T-cell (primary cell): ENCODE measurements at regions of chr1 and their contacts with region 1.

Region 1: DNA sequence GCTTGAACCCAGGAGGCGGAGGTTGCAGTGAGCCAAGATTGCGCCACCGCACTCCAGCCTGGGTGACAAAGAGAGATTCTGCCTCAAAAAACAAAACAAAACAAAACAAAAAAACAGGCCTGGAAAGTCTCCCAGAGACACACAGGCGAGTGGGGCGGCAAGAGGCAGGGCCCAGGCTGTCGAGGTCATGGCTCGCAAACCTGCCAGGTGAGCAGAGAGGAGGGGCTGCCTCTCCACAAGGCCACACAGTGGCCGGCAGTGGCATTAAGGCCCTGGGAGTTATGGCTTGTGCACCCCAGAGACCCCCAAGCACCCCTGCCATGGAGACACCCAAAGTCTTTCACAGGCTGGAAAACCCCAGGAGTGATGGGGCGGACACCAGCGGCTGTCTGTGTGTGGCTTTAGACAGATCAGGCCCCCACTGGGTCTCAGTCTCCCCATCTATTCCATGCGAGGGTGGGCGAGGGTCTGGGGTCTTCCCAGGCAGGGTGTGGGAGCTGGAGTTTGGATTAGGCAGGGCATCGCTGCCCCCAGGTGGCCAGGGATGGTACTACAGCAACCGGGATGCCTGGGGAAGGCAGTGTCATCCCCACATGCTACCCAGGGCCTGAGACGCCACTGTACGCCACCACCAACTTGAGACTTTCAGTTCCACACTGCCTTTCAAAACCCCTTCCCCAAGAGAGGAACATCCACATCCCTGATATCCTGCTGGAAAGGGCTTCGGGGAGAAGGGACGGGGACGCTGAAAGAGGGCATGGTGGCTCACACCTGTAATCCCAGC is 7.3 kb upstream of the CTRC start:
- DNase-seq: peak; percentile 35 to 83 (median 66)
- ATAC-seq: peak; percentile 53 to 75 (median 67)
- H3K4me3 ChIP-seq: no peak overlapping the region
- H3K4me3 Mint-ChIP-seq: no peak overlapping the region
- H3K27ac ChIP-seq: no peak overlapping the region
- H3K27ac Mint-ChIP-seq: no peak overlapping the region
- H3K4me1 ChIP-seq: peaks cover 0 to 2% of the 10 kb centered on the region in 2 experiments
- H3K4me1 Mint-ChIP-seq: peaks cover 0 to 8% (median 5%) of the 10 kb centered on the region in 3 donors
- H3K27me3 ChIP-seq: no peaks in the 10 kb centered on the region
- H3K27me3 Mint-ChIP-seq: no peaks in the 10 kb centered on the region

Region 2: DNA sequence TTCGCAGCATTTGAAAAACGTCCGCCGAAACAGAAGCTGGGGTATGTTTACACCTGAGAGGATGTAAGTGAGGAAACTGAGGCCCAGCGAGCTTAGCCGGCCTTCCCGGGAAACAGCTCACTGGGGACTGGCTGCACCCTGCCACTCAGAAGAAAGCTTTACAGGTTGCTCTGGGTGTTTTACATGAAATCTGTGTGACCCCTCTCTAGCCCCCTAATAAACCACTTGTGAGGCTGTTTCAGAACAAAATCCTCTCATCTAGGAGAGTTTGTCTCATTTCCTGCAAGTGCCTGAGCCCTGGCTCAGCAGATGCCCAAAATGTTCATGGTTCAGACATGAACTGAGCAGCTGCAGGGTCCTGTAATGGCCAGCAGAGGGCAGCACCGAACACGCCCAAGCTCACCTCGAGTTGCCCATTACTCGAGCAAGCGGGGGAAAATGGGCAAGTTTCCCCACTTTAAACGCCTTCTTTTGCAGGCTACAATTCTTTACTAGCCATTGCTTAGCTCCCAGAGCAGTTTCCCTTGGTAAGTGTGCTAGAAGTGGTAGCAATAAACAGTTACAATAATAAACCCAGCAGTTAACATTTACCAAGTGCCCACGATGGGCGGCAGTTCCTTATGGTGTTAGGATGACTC is 107.5 kb before region 1 on chr1:
- CTCF ChIA-PET with region 1: interaction called, 23 to 68 read pairs
- POLR2A ChIA-PET with region 1: interaction called in 1 of 2 experiments, 3 read pairs
- DNase-seq: peak; percentile 34 to 89 (median 67)
- ATAC-seq: peak; percentile 70 to 87 (median 83)
- H3K4me3 ChIP-seq: no peak overlapping the region
- H3K4me3 Mint-ChIP-seq: no peak overlapping the region
- H3K27ac ChIP-seq: no peak overlapping the region
- H3K27ac Mint-ChIP-seq: no peak overlapping the region
- H3K4me1 ChIP-seq: peaks cover 0 to 8% of the 10 kb centered on the region in 2 experiments
- H3K4me1 Mint-ChIP-seq: peaks cover 0 to 5% (median 0%) of the 10 kb centered on the region in 3 donors
- H3K27me3 ChIP-seq: peaks cover 0 to 16% of the 10 kb centered on the region in 2 experiments
- H3K27me3 Mint-ChIP-seq: peaks cover 5 to 6% of the 10 kb centered on the region in 2 donors

Region 3: DNA sequence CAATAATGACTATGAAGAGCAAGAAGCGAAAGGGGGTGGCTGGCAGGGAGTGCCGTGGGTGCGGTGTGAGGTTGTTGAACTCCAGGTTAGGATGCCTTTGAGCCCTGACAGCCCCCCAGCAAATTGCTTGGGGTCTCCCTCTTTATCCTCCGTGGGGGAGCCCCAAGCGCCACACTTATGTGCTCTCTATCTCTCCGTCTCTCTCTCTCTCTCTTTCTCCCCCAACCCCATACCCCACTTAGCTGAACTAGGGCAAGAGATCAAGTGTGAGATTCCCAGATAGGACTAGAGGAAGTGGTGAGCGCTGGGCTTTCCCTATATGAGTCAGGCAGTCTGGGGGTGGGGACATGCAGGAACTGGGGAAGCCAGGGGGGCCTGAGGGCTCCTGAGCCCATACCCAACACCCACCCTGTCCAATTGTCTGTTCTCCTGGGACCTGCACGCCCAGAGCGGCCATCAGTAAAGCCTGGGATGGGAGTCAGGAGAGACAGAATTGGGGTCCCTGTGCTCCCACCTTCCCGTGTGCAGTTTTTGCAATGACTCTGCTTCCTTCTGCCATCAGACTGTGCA is 13.5 kb before region 1 on chr1:
- CTCF ChIA-PET with region 1: no interaction called
- POLR2A ChIA-PET with region 1: interaction called in 1 of 2 experiments, 10 read pairs
- DNase-seq: peak in 33 of 35 experiments; percentile 32 to 85 (median 56)
- ATAC-seq: peak; percentile 74 to 80 (median 77)
- H3K4me3 ChIP-seq: peak overlapping the region in 1 of 2 donors; percentile 12
- H3K4me3 Mint-ChIP-seq: peak overlapping the region; percentile 51 to 71 (median 52)
- H3K27ac ChIP-seq: peak overlapping the region; percentile 89
- H3K27ac Mint-ChIP-seq: peak overlapping the region; percentile 87 to 90
- H3K4me1 ChIP-seq: peaks cover 7 to 82% of the 10 kb centered on the region in 2 experiments
- H3K4me1 Mint-ChIP-seq: peaks cover 47 to 79% (median 62%) of the 10 kb centered on the region in 3 donors
- H3K27me3 ChIP-seq: no peaks in the 10 kb centered on the region
- H3K27me3 Mint-ChIP-seq: no peaks in the 10 kb centered on the region

Region 4: DNA sequence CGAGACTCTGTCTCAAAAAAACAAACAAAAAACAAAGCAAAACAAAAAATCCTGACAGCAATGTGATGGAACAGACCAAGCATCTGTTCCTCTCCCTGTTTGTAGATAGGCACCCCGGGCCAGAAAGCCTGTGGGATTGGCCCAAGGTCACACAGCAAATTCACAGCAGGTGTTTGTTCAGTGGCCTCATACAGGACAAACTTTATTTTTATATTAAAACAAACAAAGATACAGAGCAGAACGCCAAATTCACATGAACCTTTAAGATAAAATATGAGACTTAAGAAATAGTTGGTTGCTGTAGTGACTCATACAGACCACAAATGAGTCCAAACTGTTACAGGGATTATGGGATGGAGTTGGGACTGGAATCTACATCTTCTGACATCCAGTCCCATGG is 23.3 kb after region 1 on chr1:
- CTCF ChIA-PET with region 1: no interaction called
- POLR2A ChIA-PET with region 1: no interaction called
- DNase-seq: no peak
- ATAC-seq: no peak
- H3K4me3 ChIP-seq: no peak overlapping the region
- H3K4me3 Mint-ChIP-seq: no peak overlapping the region
- H3K27ac ChIP-seq: no peak overlapping the region
- H3K27ac Mint-ChIP-seq: no peak overlapping the region
- H3K4me1 ChIP-seq: no peaks in the 10 kb centered on the region
- H3K4me1 Mint-ChIP-seq: no peaks in the 10 kb centered on the region
- H3K27me3 ChIP-seq: peaks cover 0 to 18% of the 10 kb centered on the region in 2 experiments
- H3K27me3 Mint-ChIP-seq: peaks cover 15 to 21% of the 10 kb centered on the region in 2 donors

Region 5: GRCh38 chr1:15788624-15789301 is 357.8 kb after region 1 on chr1:
- CTCF ChIA-PET with region 1: no interaction called
- POLR2A ChIA-PET with region 1: no interaction called
- DNase-seq: no peak
- ATAC-seq: no peak
- H3K4me3 ChIP-seq: no peak overlapping the region
- H3K4me3 Mint-ChIP-seq: no peak overlapping the region
- H3K27ac ChIP-seq: no peak overlapping the region
- H3K27ac Mint-ChIP-seq: no peak overlapping the region
- H3K4me1 ChIP-seq: peaks cover 0 to 5% of the 10 kb centered on the region in 2 experiments
- H3K4me1 Mint-ChIP-seq: peaks cover 3 to 6% (median 3%) of the 10 kb centered on the region in 3 donors
- H3K27me3 ChIP-seq: peaks cover 0 to 30% of the 10 kb centered on the region in 2 experiments
- H3K27me3 Mint-ChIP-seq: peaks cover 11 to 14% of the 10 kb centered on the region in 2 donors